Common myeloid progenitor, CD34-positive (primary cell): ENCODE measurements at regions of chr20 and their contacts with region 1.

Region 1: DNA sequence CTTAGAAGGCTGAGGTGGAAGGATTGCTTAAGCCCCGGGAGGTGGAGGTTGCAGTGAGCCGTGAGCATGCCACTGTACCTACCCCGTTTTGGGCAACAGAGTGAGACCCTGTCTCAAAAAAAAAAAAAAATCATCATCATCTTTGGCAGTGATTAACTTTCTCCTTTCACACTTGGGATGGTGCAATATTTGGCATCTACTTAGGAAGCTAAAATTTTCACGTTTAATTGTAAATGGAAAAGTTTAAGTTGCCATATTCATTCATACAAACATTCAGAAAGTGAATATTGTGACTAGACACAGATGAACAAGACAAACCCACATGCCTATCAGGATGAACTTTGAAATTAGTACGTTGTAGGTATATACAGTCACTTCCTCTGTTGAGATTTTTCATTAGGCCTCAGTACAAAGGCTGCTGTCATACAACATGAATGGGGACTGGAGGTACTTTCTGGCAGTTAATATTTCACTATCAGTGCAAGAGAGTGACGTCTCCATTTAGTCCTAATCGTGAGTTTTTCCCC is 10.3 kb downstream of the TOP1 start:
- DNase-seq: no peak
- H3K4me3 ChIP-seq: no peak overlapping the region
- H3K27ac ChIP-seq: no peak overlapping the region
- H3K4me1 ChIP-seq: peaks cover 2 to 19% (median 10%) of the 10 kb centered on the region in 4 experiments
- H3K27me3 ChIP-seq: no peaks in the 10 kb centered on the region

Region 2: DNA sequence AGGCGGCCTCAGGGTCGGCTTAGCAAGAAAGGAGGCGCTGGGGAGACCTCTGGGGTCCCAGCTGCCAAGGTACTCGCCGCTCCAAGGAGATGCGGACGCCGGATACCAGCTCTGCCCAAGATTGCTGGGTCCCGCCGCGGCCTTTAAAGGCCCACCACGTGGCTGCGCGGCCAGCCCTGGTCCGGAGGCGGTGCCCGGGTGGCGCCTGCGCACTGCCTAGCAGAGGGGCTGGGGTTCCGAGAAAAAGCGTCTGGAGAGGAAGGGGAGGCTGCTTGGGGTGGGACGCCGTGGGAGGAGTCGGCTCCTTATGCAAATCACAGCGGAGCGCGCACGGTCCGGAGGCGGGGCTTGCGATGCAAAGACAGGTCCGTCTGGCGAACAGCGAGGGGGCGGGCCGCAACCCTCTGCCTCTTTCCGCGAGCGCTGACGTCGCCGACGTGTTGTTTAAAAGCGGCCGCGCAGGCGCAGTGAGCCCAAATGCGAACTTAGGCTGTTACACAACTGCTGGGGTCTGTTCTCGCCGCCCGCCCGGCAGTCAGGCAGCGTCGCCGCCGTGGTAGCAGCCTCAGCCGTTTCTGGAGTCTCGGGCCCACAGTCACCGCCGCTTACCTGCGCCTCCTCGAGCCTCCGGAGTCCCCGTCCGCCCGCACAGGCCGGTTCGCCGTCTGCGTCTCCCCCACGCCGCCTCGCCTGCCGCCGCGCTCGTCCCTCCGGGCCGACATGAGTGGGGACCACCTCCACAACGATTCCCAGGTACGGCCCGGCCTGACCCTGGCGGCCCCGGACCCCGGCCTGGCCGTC is 10.4 kb before region 1 on chr20 and contains the start of gene TOP1:
- CTCF ChIA-PET with region 1: interaction called, 14 read pairs
- POLR2A ChIA-PET with region 1: no interaction called
- DNase-seq: peak; percentile 100
- H3K4me3 ChIP-seq: peak within 1 kb of the TSS; percentile 77 to 95 (median 89)
- H3K27ac ChIP-seq: peak within 1 kb of the TSS; percentile 95 to 98
- H3K4me1 ChIP-seq: peaks cover 25 to 47% (median 35%) of the 10 kb centered on the region in 4 experiments
- H3K27me3 ChIP-seq: no peaks in the 10 kb centered on the region

Region 3: GRCh38 chr20:41108531-41108930 is 69.6 kb after region 1 on chr20:
- CTCF ChIA-PET with region 1: no interaction called
- POLR2A ChIA-PET with region 1: no interaction called
- DNase-seq: no peak
- H3K4me3 ChIP-seq: no peak overlapping the region
- H3K27ac ChIP-seq: no peak overlapping the region
- H3K4me1 ChIP-seq: no peaks in the 10 kb centered on the region
- H3K27me3 ChIP-seq: no peaks in the 10 kb centered on the region